ENCODE measurements at regions of chr2 and their contacts with region 1.

Region 1: DNA sequence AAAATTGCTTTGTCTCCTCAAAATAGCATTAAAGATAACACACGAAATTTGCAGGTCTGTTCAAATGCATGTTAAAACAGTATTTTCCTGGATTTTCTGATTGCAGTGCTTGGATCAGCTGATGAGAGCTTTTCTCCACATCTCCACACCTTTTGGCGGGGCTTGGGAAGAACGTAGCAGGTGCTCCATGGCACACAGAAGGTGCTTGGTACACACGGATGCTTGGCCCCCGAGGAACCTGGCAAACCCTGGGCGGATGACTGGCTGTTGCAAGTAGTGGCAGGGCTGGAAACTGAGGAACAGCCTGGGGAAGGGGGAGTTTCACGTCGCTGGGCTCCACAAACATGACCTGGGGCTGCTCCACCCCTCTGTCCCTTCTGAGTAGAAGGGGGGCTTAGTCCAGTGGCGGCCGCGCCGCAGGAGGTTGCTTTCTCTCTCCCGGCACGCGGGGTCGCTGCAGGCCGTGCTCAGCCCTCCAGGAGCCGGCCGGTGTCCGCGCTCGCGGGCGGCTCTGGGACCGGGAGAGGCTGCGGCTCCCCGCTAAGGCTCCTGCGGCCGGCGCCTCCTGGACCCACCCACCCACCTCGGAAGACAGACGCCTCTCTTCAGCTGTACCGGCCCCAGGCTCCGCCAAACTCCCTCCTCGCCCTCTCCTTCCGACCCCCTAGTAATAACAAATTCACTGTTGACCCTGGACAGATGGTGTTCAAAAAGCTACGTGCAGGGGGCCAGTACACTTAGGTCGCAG is 69.3 kb downstream of the MARCO start:
- DNase-seq: peak; percentile 61 to 62 (median 62)
- ATAC-seq: peak; percentile 88 to 98 (median 94)
- H3K4me3 ChIP-seq: no peak overlapping the region
- H3K27ac ChIP-seq: no peak overlapping the region
- H3K4me1 ChIP-seq: no peaks in the 10 kb centered on the region
- H3K27me3 ChIP-seq: no peaks in the 10 kb centered on the region
- CTCF ChIP-seq: peak; percentile 58 to 70 (median 65)
- POLR2A ChIP-seq: no peak

Region 2: DNA sequence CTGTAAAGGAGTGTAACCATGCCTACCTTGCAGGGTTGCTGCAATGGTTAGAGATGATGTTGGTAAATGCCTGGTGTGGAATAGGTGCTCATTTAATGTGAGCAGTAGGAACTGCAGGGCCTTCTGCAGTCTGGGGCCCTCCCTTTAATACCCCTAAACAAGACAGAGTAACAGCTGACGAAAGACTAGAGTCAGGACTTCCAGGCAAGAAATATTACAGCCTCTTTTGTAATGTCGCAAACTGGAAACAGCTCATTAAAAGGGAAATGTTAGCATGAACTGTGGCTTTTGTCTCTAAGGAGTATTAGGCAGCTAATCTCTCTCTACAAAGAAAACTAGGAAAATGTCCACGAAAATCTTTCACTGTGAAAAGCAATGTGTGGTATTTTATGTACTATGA is 43.3 kb before region 1 on chr2:
- intact Hi-C with region 1: no loop called
- DNase-seq: no peak
- ATAC-seq: peak in 2 of 4 donors; percentile 11 to 19
- H3K4me3 ChIP-seq: no peak overlapping the region
- H3K27ac ChIP-seq: no peak overlapping the region
- H3K4me1 ChIP-seq: no peaks in the 10 kb centered on the region
- H3K27me3 ChIP-seq: no peaks in the 10 kb centered on the region
- CTCF ChIP-seq: no peak
- POLR2A ChIP-seq: no peak

Region 3: GRCh38 chr2:119290859-119291587 is 279.7 kb after region 1 on chr2:
- intact Hi-C with region 1: loop called in 1 of 2 experiments (anchors 5 kb)
- DNase-seq: peak; percentile 78 to 84 (median 80)
- ATAC-seq: peak; percentile 94 to 96 (median 96)
- H3K4me3 ChIP-seq: no peak overlapping the region
- H3K27ac ChIP-seq: no peak overlapping the region
- H3K4me1 ChIP-seq: peaks cover 0 to 19% (median 0%) of the 10 kb centered on the region in 4 donors
- H3K27me3 ChIP-seq: no peaks in the 10 kb centered on the region
- CTCF ChIP-seq: peak; percentile 78 to 90 (median 84)
- POLR2A ChIP-seq: no peak

Measured in right lobe of liver (tissue), 6 donors.